ENCODE measurements at regions of chr2 and their contacts with region 1.

Region 1: DNA sequence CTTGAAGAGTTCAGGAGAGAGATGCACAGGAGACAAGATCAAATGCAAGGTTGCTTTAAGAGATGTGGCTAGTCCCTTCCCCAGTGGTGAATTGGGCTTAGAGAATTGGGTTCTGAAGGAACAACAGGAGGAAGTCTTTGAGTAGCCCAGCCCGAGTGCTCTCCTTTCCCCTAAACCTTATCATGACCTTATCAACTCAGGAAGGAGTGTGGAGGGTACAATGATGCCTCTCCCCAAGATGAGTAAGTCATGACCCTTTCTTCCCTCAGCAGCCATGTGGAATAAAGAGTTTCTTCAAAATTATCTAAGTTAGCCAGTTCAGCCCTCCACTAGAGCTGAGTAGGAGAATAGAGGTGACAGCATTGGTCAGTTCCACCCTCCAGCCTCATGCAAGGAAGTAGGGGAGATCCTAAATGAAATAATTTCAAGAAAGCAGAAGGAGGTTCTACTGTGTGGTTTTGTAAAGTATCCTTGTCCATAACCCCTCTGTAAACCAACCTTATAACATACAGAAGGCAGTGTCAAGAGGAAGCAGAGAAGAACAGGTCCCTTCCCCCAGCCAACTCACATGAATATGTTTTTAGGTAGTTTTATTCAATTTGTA is 88.4 kb downstream of the ARHGAP15 start:
- DNase-seq: no peak
- H3K4me3 Mint-ChIP-seq: no peak overlapping the region
- H3K27ac Mint-ChIP-seq: no peak overlapping the region
- H3K4me1 Mint-ChIP-seq: no peaks in the 10 kb centered on the region
- H3K27me3 Mint-ChIP-seq: no peaks in the 10 kb centered on the region
- CTCF ChIP-seq: no peak

Region 2: GRCh38 chr2:143110758-143111428 is 106.7 kb before region 1 on chr2:
- CTCF ChIA-PET with region 1: interaction called, 18 read pairs
- intact Hi-C with region 1: loop called (anchors 1 kb)
- DNase-seq: peak; percentile 61
- H3K4me3 Mint-ChIP-seq: no peak overlapping the region
- H3K27ac Mint-ChIP-seq: no peak overlapping the region
- H3K4me1 Mint-ChIP-seq: no peaks in the 10 kb centered on the region
- H3K27me3 Mint-ChIP-seq: no peaks in the 10 kb centered on the region
- CTCF ChIP-seq: peak; percentile 48

Measured in Calu3 (cell line).